AG04449 (cell line): ENCODE measurements at regions of chr1 and their contacts with region 1.

Region 1: GRCh38 chr1:67535474-67535873 is 105.3 kb upstream of the SERBP1 start:
- DNase-seq: peak; percentile 49
- H3K4me3 ChIP-seq: no peak overlapping the region
- CTCF ChIP-seq: peak; percentile 95

Region 2: DNA sequence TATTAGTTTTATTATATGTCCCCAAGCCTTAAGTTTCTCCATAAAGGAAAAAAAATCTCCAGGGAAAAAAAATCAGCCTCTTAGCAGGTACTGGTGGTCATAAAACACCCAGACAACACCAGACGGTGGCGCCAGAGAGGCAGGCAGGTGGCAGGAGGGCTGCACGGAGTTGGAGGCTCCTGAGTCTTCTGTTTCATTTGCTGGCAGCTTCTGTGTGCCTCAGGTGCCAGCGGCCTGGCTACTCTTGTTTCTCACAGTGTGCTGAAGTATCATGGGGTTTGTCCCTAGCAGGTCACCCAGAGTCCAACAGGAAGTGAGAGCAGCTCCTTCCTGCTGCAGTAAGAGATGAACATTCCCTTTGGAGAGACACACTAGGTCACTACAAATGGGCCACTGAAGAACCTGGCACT is 26.2 kb after region 1 on chr1:
- CTCF ChIA-PET with region 1: interaction called, 46 read pairs
- POLR2A ChIA-PET with region 1: no interaction called
- DNase-seq: no peak
- H3K4me3 ChIP-seq: no peak overlapping the region
- CTCF ChIP-seq: peak; percentile 93

Region 3: DNA sequence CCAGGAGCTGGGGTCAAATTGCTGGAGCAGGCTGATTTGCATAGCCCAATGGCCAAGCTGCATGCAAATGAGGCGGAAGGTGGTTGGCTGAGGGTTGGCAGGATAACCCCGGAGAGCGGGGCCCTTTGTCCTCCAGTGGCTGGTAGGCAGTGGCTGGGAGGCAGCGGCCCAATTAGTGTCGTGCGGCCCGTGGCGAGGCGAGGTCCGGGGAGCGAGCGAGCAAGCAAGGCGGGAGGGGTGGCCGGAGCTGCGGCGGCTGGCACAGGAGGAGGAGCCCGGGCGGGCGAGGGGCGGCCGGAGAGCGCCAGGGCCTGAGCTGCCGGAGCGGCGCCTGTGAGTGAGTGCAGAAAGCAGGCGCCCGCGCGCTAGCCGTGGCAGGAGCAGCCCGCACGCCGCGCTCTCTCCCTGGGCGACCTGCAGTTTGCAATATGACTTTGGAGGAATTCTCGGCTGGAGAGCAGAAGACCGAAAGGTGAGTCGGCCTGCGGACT is 149.6 kb after region 1 on chr1 and contains the start of gene GADD45A:
- CTCF ChIA-PET with region 1: interaction called, 27 read pairs
- POLR2A ChIA-PET with region 1: interaction called, 28 read pairs
- DNase-seq: peak; percentile 98
- H3K4me3 ChIP-seq: peak within 1 kb of the TSS; percentile 91
- CTCF ChIP-seq: no peak

Region 4: GRCh38 chr1:67722292-67722944 is 186.9 kb after region 1 on chr1:
- CTCF ChIA-PET with region 1: interaction called, 11 read pairs
- POLR2A ChIA-PET with region 1: no interaction called
- DNase-seq: no peak
- H3K4me3 ChIP-seq: no peak overlapping the region
- CTCF ChIP-seq: no peak

Region 5: DNA sequence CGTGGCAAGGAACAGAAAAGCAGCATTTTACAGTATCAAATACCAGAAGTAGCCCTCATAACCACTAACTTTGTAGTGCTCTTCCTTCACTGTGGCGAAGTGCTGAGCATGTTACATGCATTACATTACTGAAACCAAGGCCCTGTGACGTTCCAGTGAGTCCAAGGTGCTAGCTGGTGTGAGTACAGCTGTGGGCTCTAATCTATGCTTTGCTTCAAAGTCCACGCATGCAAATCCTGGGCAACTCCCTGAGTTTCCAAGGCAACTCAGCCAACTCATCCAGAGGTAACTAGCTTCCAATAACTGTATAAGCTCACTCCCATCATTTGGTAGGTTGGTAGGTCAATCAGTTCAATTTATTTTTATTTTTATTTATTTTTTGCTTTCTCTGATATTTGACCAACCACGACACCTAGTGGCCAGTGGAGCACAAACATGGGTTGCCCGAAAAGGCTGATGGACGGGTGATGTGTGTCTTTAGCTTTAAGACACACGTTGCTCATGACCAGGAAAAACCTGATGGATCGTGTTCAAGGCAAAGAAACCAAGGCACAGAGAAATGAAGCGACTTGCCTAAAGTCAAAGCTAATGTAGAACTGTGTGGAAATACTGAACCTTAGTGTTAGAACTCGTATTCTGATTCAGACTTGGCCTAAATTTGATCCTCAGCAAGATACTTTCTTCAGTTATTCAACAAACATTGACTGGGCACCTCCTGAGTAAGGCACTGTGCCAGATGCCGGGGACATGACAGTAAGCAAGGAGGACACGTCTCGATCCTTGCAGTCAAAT is 224.8 kb after region 1 on chr1:
- CTCF ChIA-PET with region 1: interaction called, 653 read pairs
- POLR2A ChIA-PET with region 1: interaction called, 4 read pairs
- DNase-seq: no peak
- H3K4me3 ChIP-seq: no peak overlapping the region
- CTCF ChIP-seq: peak; percentile 59

Region 6: GRCh38 chr1:67853704-67854103 is 318.2 kb after region 1 on chr1:
- CTCF ChIA-PET with region 1: interaction called, 13 read pairs
- POLR2A ChIA-PET with region 1: no interaction called
- DNase-seq: no peak
- H3K4me3 ChIP-seq: no peak overlapping the region
- CTCF ChIP-seq: peak; percentile 94